ENCODE measurements at regions of chr3 and their contacts with region 1.

Region 1: DNA sequence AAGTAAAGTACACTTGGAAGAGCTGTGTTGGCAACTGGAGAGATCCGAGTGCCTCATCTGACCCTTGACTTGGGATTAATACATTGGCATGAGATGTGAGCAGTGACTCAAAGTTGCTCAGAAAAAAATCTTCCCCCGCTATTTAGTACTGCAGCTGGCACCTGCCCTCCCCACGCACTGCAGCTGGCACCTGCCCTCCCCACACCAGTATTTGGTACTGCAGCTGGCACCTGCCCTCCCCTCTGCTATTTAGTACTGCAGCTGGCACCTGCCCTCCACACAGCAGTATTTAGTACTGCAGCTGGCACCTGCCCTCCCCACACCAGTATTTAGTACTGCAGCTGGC is 3.9 kb upstream of the MUC20 start:
- DNase-seq: no peak
- ATAC-seq: no peak
- H3K4me3 Mint-ChIP-seq: no peak overlapping the region
- H3K27ac Mint-ChIP-seq: no peak overlapping the region
- H3K4me1 Mint-ChIP-seq: peaks cover 8% of the 10 kb centered on the region
- H3K27me3 Mint-ChIP-seq: peaks cover 6% of the 10 kb centered on the region
- CTCF ChIP-seq: no peak

Region 2: DNA sequence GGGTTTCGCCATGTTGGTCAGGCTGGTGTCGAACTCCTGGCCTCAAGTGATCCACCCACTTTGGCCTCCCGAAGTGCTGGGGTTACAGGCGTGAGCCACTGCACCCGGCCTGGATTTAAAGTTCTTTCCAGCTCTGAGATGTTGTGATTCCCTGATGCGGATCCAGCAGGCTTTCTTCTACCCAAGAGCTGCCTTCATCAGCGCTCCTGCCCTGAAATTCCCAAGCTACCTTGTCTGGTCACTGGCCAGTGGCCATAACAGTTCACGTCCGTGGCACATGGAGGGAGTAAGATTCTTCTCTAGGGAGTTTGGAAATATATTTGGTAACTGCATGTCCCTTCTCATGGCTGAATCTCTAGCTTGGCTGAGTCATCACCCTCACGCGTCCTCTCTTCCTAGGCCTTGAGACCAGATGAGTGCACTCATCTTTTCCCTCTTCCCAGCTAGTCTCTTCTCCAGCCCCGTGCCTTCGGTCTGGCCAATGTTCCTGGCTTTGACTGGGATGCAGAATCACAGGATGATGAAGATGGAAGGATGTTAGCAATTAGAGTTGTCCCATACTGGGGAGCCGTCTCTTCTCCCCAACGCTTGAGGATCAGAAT is 103.3 kb before region 1 on chr3:
- CTCF ChIA-PET with region 1: no interaction called
- POLR2A ChIA-PET with region 1: no interaction called
- intact Hi-C with region 1: loop called (anchors 2 kb)
- DNase-seq: no peak
- ATAC-seq: no peak
- H3K4me3 Mint-ChIP-seq: no peak overlapping the region
- H3K27ac Mint-ChIP-seq: no peak overlapping the region
- H3K4me1 Mint-ChIP-seq: peaks cover 6% of the 10 kb centered on the region
- H3K27me3 Mint-ChIP-seq: peaks cover 10% of the 10 kb centered on the region
- CTCF ChIP-seq: no peak

Region 3: DNA sequence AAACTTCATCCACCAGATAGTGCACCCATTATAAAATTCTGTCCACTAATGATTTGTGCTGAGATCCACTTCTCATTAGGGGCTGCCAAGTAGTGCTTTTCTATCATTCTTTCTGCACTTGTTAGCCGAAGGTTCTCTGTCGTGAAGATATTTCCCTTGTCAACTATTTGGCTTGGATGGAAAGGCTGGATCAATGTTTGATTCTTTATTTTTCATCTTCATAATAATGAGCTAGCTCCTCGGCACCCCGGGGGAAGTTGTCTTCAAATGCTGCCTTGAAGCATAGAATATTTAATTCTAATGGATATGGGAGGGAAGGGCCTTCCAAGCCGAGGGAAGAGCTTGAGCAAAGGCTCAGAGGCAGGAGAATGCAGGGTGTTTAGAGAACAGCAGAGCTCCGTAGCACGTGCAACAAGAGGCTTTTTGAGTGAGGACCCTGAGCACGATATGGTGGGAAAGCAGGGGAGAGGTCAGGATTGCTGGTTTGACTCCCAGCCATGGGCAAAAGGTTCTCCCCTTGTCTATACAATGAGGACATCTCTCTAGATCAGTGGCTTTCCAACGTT is 12.3 kb before region 1 on chr3:
- CTCF ChIA-PET with region 1: interaction called, 3 read pairs
- POLR2A ChIA-PET with region 1: interaction called, 20 read pairs
- intact Hi-C with region 1: no loop called
- DNase-seq: no peak
- ATAC-seq: no peak
- H3K4me3 Mint-ChIP-seq: no peak overlapping the region
- H3K27ac Mint-ChIP-seq: no peak overlapping the region
- H3K4me1 Mint-ChIP-seq: peaks cover 4% of the 10 kb centered on the region
- H3K27me3 Mint-ChIP-seq: no peaks in the 10 kb centered on the region
- CTCF ChIP-seq: peak; percentile 28

Measured in activated B cell treated with CpG ODN at 0.5 μM for 24 hours (primary cell).